ENCODE measurements at regions of chr15 and their contacts with region 1.

Region 1: DNA sequence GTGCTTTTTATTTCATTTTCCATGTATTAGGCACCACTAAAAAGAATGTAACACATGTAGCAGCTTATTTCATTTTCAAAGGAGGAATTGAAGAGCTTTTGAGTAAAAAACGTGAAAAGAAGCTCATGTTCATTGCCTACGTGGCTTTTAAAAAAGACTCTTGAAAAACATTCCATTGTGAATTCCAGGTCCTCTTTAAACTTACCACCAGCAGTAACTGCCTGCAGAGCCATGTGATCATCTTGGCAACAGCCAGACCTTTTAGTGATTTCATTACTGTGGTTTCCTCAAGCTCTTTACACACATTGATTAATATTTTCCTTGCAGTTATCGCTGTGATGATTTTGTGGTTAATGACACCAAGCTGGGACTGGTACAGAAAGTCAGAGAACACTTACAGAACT is 43.8 kb upstream of the FBXL22 start:
- DNase-seq: peak in 1 of 14 experiments; percentile 27
- ATAC-seq: peak; percentile 51
- H3K4me3 ChIP-seq: no peak overlapping the region
- H3K4me3 Mint-ChIP-seq: no peak overlapping the region
- H3K27ac ChIP-seq: no peak overlapping the region
- H3K27ac Mint-ChIP-seq: peak overlapping the region; percentile 67
- H3K4me1 ChIP-seq: no peaks in the 10 kb centered on the region
- H3K4me1 Mint-ChIP-seq: peaks cover 68% of the 10 kb centered on the region
- H3K27me3 ChIP-seq: no peaks in the 10 kb centered on the region
- H3K27me3 Mint-ChIP-seq: no peaks in the 10 kb centered on the region
- CTCF ChIP-seq: no peak

Region 2: DNA sequence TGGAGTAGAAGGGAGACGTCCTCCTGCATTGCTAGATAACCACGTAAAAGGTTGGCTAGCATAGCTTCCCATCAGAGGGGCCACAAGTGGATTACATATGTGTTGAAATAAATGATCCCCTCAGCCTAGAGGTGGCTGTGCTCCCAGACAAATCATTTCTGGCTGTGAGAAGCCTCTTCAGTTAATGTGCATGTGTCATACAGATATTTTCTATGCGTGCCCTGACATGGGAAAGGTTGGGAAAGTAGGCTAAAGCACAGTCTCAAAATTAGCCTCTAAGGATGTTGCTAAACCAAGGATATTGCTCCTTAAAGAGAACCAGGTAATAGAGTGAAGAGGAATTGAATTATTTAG is 31.2 kb before region 1 on chr15:
- CTCF ChIA-PET with region 1: no interaction called
- POLR2A ChIA-PET with region 1: no interaction called
- intact Hi-C with region 1: loop called in 1 of 2 experiments (anchors 5 kb)
- DNase-seq: no peak
- ATAC-seq: no peak
- H3K4me3 ChIP-seq: no peak overlapping the region
- H3K4me3 Mint-ChIP-seq: peak overlapping the region; percentile 36
- H3K27ac ChIP-seq: no peak overlapping the region
- H3K27ac Mint-ChIP-seq: no peak overlapping the region
- H3K4me1 ChIP-seq: peaks cover 59% of the 10 kb centered on the region
- H3K4me1 Mint-ChIP-seq: peaks cover 98% of the 10 kb centered on the region
- H3K27me3 ChIP-seq: no peaks in the 10 kb centered on the region
- H3K27me3 Mint-ChIP-seq: no peaks in the 10 kb centered on the region
- CTCF ChIP-seq: no peak

Region 3: DNA sequence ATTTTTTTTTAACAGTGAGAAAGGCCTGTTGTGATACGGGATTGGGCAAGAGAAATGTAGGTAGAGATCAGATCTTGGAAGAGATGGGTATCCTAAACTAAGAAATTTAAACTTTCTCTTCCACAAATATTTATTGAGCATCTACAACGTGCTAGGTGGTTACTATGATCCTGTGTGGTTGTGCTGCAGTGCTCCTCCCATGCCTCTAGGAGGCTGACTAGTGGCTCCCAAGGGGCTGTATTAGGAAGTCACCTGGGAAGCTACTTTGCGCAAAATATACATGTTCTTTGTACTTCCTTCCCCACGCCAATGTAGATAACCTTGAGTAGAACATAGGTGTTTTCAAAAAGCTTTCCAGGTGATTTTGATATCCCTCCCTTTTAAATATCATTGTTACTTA is 21.8 kb before region 1 on chr15:
- CTCF ChIA-PET with region 1: interaction called, 5 read pairs
- POLR2A ChIA-PET with region 1: interaction called, 4 read pairs
- intact Hi-C with region 1: loop called in 1 of 2 experiments (anchors 2 kb)
- DNase-seq: peak in 2 of 14 experiments; percentile 28 to 38
- ATAC-seq: peak; percentile 51
- H3K4me3 ChIP-seq: no peak overlapping the region
- H3K4me3 Mint-ChIP-seq: peak overlapping the region; percentile 2
- H3K27ac ChIP-seq: no peak overlapping the region
- H3K27ac Mint-ChIP-seq: no peak overlapping the region
- H3K4me1 ChIP-seq: peaks cover 35% of the 10 kb centered on the region
- H3K4me1 Mint-ChIP-seq: peaks cover 92% of the 10 kb centered on the region
- H3K27me3 ChIP-seq: no peaks in the 10 kb centered on the region
- H3K27me3 Mint-ChIP-seq: no peaks in the 10 kb centered on the region
- CTCF ChIP-seq: peak; percentile 21

Region 4: DNA sequence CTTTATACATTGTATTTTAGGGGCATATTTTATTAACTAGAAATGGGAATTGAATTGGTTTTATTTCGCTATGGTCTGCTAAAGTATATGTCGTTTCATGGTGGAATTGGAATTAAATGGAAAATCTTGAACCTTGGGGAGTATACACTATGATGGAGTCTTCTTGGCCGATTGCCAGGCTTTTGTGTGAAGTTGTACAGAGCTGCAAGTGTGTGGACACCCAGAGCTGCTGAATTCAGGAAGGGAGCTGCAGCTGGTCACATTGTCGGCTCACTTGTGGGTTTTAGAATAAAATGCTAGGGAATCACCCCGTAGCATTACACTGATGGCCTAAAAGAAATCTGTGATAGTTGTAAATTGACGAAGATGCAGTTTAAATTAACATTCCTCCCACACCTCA is 13.9 kb before region 1 on chr15:
- CTCF ChIA-PET with region 1: interaction called, 5 read pairs
- POLR2A ChIA-PET with region 1: interaction called, 10 read pairs
- intact Hi-C with region 1: no loop called
- DNase-seq: peak in 3 of 14 experiments; percentile 28 to 30 (median 30)
- ATAC-seq: no peak
- H3K4me3 ChIP-seq: no peak overlapping the region
- H3K4me3 Mint-ChIP-seq: no peak overlapping the region
- H3K27ac ChIP-seq: no peak overlapping the region
- H3K27ac Mint-ChIP-seq: no peak overlapping the region
- H3K4me1 ChIP-seq: peaks cover 7% of the 10 kb centered on the region
- H3K4me1 Mint-ChIP-seq: peaks cover 69% of the 10 kb centered on the region
- H3K27me3 ChIP-seq: no peaks in the 10 kb centered on the region
- H3K27me3 Mint-ChIP-seq: no peaks in the 10 kb centered on the region
- CTCF ChIP-seq: no peak

Region 5: GRCh38 chr15:63593705-63594671 is 40.6 kb after region 1 on chr15:
- CTCF ChIA-PET with region 1: no interaction called
- POLR2A ChIA-PET with region 1: no interaction called
- intact Hi-C with region 1: no loop called
- DNase-seq: peak in 1 of 14 experiments; percentile 28
- ATAC-seq: no peak
- H3K4me3 ChIP-seq: no peak overlapping the region
- H3K4me3 Mint-ChIP-seq: no peak overlapping the region
- H3K27ac ChIP-seq: no peak overlapping the region
- H3K27ac Mint-ChIP-seq: peak overlapping the region; percentile 72
- H3K4me1 ChIP-seq: peaks cover 18% of the 10 kb centered on the region
- H3K4me1 Mint-ChIP-seq: peaks cover 69% of the 10 kb centered on the region
- H3K27me3 ChIP-seq: no peaks in the 10 kb centered on the region
- H3K27me3 Mint-ChIP-seq: no peaks in the 10 kb centered on the region
- CTCF ChIP-seq: no peak

Region 6: GRCh38 chr15:63638839-63639238 is 85.4 kb after region 1 on chr15:
- CTCF ChIA-PET with region 1: no interaction called
- POLR2A ChIA-PET with region 1: no interaction called
- intact Hi-C with region 1: no loop called
- DNase-seq: no peak
- ATAC-seq: no peak
- H3K4me3 ChIP-seq: no peak overlapping the region
- H3K4me3 Mint-ChIP-seq: no peak overlapping the region
- H3K27ac ChIP-seq: no peak overlapping the region
- H3K27ac Mint-ChIP-seq: peak overlapping the region; percentile 42
- H3K4me1 ChIP-seq: no peaks in the 10 kb centered on the region
- H3K4me1 Mint-ChIP-seq: no peaks in the 10 kb centered on the region
- H3K27me3 ChIP-seq: no peaks in the 10 kb centered on the region
- H3K27me3 Mint-ChIP-seq: no peaks in the 10 kb centered on the region
- CTCF ChIP-seq: no peak